ENCODE measurements at regions of chr2 and their contacts with region 1.

Region 1: GRCh38 chr2:112726497-112727190 is 5.8 kb downstream of the NT5DC4 start:
- DNase-seq: peak; percentile 89
- H3K4me3 ChIP-seq: no peak overlapping the region
- H3K27ac ChIP-seq: no peak overlapping the region
- H3K4me1 ChIP-seq: no peaks in the 10 kb centered on the region
- H3K27me3 ChIP-seq: peaks cover 0 to 3% of the 10 kb centered on the region in 2 donors
- CTCF ChIP-seq: peak; percentile 92
- POLR2A ChIP-seq: no peak

Region 2: DNA sequence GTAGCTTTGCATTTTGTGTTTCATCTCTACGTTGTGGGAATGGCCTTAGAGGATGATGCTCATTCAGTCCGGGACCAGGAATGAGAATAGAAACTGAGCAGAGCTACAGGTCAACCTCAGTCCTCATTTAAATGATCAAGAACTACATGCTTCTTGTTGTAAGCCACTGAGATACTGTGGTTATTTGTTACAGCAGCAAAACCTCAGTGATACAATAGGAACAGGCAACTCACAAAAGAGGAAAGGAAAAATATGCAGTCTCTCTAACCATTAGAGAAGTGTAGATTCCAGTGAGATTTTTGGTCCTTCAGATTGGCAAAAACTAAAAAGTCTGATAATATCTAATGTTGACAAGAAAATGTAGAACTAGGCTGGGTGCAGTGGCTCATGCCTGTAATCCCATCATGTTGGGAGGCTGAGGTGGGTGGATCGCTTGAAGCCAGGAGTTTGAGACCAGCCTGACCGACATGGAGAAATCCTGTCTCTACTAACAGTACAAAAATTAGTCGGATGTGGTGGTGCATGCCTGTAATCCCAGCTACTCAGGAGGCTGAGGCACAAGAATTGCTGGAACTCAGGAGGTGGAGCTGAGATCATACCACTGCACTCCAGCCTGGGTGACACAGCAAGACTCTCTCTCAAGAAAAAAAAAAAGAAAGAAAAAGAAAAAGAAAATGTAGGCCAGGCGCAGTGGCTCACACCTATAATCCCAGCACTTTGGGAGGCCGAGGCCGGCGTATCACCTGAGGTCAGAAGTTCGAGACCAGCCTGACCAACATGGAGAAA is 128.9 kb before region 1 on chr2:
- intact Hi-C with region 1: loop called (anchors 10 kb)
- DNase-seq: no peak
- H3K4me3 ChIP-seq: no peak overlapping the region
- H3K27ac ChIP-seq: no peak overlapping the region
- H3K4me1 ChIP-seq: no peaks in the 10 kb centered on the region
- H3K27me3 ChIP-seq: no peaks in the 10 kb centered on the region
- CTCF ChIP-seq: no peak
- POLR2A ChIP-seq: no peak